AG04449 (cell line): ENCODE measurements at regions of chr17 and their contacts with region 1.

Region 1: GRCh38 chr17:43316522-43317142 is 82.2 kb upstream of the ARL4D start:
- DNase-seq: no peak
- H3K4me3 ChIP-seq: no peak overlapping the region
- CTCF ChIP-seq: no peak

Region 2: DNA sequence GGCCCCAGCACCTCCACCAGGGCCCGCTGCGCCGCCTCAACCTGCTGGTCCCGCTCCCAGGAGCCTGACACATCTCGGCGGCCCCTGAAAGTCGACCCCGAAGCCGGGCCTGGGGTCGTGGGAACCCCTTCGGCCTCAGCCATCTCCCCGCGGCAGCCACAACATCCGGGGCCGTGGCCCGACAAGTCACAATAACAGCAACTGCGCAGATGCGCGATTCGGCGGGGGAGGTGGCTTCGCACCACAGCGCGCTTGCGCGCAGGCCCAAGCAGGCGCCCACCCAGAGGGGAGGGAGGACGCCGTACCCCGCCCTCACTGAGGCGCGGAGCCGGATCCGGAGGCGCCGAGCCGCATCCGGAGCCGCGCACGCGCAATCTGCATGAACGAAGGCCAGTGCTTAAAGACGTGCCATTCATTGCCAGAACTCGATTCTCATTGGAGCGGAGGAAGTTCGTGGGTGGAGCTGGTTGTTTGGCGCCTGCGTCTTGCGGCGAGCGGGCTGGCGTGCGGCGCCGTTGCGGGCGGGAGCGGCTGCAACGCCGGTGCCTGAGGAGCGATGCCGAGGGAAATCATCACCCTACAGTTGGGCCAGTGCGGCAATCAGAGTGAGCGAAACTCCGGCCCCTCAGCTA is 707.3 kb before region 1 on chr17 and contains the starts of genes RETREG3 and TUBG1:
- CTCF ChIA-PET with region 1: no interaction called
- POLR2A ChIA-PET with region 1: no interaction called
- DNase-seq: peak; percentile 92
- H3K4me3 ChIP-seq: peak within 1 kb of the TSS; percentile 96
- CTCF ChIP-seq: peak; percentile 75

Region 3: GRCh38 chr17:43170766-43171585 is 145.7 kb before region 1 on chr17 and contains the start of gene NBR1:
- CTCF ChIA-PET with region 1: no interaction called
- POLR2A ChIA-PET with region 1: interaction called, 15 read pairs
- DNase-seq: peak; percentile 92
- H3K4me3 ChIP-seq: peak within 1 kb of the TSS; percentile 85
- CTCF ChIP-seq: no peak

Region 4: GRCh38 chr17:43211480-43212402 is 104.9 kb before region 1 on chr17 and contains the start of gene TMEM106A:
- CTCF ChIA-PET with region 1: interaction called, 3 read pairs
- POLR2A ChIA-PET with region 1: interaction called, 27 read pairs
- DNase-seq: peak; percentile 58
- H3K4me3 ChIP-seq: peak within 1 kb of the TSS; percentile 61
- CTCF ChIP-seq: peak; percentile 18

Region 5: GRCh38 chr17:43338886-43339516 is 22.4 kb after region 1 on chr17:
- CTCF ChIA-PET with region 1: no interaction called
- POLR2A ChIA-PET with region 1: no interaction called
- DNase-seq: no peak
- H3K4me3 ChIP-seq: no peak overlapping the region
- CTCF ChIP-seq: peak; percentile 78